OCI-LY7 (cell line): ENCODE measurements at regions of chr19 and their contacts with region 1.

Region 1: DNA sequence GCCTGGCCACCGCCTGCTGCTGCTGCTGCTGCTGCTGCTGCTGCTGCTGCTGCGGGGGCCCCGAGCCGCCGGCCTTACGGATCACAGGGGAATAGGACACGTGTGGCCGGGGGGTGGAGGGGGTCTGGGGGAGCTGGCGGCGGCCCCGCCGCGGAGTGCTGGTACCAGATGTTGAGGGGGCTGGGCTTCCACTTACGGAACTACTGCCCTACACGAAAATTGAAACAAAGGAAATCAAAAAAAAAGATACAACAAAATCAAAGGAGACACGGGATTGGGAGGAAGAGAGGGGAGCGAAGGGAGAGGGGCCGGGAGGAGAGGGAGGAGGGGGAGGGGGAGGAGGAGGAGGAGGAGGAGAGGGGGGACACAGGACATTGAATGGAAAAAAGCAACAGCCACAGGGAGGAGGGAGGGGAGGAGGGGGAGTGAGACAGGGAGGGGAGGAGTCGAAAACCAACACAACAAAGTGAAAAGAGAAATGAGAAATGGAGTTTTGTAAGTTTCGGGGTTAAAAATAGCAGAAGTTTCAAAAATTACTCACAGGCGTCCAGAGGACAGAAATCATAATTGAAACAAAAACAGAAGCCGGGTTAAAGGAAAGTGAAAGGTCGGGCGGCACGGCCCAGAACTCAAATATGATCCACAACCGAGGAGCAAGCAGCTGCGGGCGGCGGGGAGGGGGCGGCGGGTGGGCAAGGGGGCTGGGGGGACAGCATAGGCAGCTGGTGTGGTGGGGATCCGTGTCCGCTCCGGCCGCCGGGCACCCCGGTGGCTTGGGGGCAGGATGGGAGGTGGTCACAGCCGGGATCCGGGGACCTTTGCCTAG is 57.8 kb downstream of the IER2 start:
- DNase-seq: peak; percentile 90
- H3K4me3 ChIP-seq: peak overlapping the region; percentile 65
- H3K27ac ChIP-seq: peak overlapping the region; percentile 95
- H3K4me1 ChIP-seq: peaks cover 54% of the 10 kb centered on the region
- CTCF ChIP-seq: no peak

Region 2: DNA sequence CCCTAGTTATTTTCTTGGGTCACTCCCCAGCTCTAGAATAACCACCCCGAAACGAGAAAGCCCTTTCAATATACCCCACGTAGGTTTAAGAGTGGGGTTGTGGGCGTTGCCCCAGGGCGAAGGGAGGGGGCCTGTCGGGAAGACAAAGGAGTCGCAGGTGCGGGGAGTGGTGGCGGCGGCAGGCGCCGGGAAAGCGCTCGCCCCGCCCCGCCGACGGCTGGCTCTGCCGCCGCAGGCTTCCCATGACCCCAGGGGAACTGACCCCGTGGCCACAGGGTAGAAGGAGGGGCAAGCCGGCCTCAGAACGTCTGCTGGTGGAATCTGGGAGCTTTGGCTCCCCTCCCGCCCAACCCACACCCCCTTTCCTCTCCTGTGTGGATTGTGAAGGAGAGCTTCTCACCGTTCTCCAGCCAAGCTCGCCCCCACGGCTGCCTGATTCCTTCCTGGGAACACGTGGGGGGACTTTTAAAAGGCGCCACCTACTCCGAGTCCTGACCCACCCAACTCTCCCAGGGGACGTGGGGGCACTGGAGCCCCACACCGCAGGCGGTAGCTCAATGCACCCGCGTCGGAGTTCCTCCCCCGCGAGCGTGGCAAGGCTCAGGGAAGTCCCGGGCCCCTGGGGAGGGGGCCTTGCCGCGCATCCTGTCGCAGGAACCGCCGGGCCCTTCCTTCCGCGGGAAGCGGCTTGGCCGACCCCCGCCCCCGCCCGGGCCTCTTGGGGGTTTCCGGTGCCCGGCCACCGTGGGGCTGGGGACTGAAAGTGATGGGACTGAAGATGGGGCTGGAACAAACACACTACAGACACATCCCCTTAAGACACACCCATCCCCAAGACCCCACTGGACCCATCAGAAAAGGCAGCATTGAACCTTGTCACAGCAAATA is 52.3 kb before region 1 on chr19:
- CTCF ChIA-PET with region 1: interaction called, 8 read pairs
- POLR2A ChIA-PET with region 1: interaction called, 3 read pairs
- intact Hi-C with region 1: loop called (anchors 2 kb)
- DNase-seq: peak; percentile 91
- H3K4me3 ChIP-seq: peak overlapping the region; percentile 97
- H3K27ac ChIP-seq: peak overlapping the region; percentile 100
- H3K4me1 ChIP-seq: peaks cover 53% of the 10 kb centered on the region
- CTCF ChIP-seq: no peak